CD4-positive, alpha-beta memory T cell (primary cell): ENCODE measurements at regions of chr22 and their contacts with region 1.

Region 1: GRCh38 chr22:24423519-24424000 is 3.8 kb upstream of the ADORA2A start:
- DNase-seq: peak in 4 of 5 donors; percentile 44 to 64 (median 57)
- H3K4me3 ChIP-seq: peak overlapping the region in 1 of 2 donors; percentile 32
- H3K4me3 Mint-ChIP-seq: peak overlapping the region in 7 of 8 donors; percentile 40 to 75 (median 65)
- H3K27ac ChIP-seq: no peak overlapping the region
- H3K27ac Mint-ChIP-seq: peak overlapping the region in 1 of 7 donors; percentile 86
- H3K4me1 ChIP-seq: peaks cover 37% of the 10 kb centered on the region
- H3K4me1 Mint-ChIP-seq: peaks cover 26 to 41% (median 33%) of the 10 kb centered on the region in 4 donors
- H3K27me3 ChIP-seq: no peaks in the 10 kb centered on the region
- H3K27me3 Mint-ChIP-seq: no peaks in the 10 kb centered on the region

Region 2: DNA sequence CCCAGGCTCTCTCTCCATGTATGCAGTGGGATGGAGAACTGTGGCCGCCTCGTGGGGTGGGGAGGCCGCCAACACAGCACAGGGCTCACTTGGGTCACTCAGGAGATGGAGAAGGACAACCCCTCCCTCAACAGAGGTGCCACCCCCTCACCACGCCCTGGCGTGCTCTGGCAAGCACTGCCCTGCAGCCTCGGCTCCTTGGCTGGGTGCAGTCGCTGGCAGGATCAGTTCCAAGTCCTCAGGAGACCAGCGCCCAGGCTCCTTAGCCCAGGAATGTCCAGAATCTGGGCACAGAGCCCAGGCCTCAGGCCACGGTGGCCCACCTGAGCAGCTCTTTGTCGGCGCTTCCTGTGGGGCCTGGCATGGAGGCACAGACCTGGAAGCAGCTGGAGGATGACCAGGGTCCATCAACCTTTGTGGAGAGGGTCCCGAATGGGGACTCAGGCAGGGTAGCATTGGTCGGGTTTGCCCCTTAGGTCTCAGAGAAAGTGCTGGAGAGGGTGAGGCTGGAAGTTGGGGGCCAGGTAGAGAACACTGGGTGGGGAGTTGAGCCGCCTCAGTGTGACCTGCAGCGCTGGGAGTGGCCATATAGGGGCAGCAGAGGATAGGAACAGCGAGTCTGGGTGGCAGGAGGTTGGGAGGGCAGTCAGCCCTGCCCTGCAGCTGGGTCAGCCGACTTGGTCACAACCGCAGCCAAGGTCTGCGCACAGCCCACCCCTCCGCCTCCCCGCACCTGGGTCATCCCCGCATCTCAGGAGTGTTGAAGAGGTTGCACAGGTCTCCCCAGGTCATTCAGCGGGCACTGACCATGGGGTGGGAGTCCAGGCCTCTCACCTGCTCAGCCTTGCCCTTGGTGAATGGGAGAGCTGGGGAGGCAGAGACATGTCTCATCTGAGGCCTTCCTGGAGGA is 234.1 kb before region 1 on chr22:
- CTCF ChIA-PET with region 1: no interaction called
- POLR2A ChIA-PET with region 1: no interaction called
- intact Hi-C with region 1: no loop called
- DNase-seq: peak in 2 of 5 donors; percentile 22 to 24
- H3K4me3 ChIP-seq: no peak overlapping the region
- H3K4me3 Mint-ChIP-seq: no peak overlapping the region
- H3K27ac ChIP-seq: no peak overlapping the region
- H3K27ac Mint-ChIP-seq: peak overlapping the region in 1 of 7 donors; percentile 52
- H3K4me1 ChIP-seq: no peaks in the 10 kb centered on the region
- H3K4me1 Mint-ChIP-seq: peaks cover 0 to 2% (median 0%) of the 10 kb centered on the region in 4 donors
- H3K27me3 ChIP-seq: no peaks in the 10 kb centered on the region
- H3K27me3 Mint-ChIP-seq: no peaks in the 10 kb centered on the region

Region 3: GRCh38 chr22:24325105-24325757 is 98.3 kb before region 1 on chr22:
- CTCF ChIA-PET with region 1: interaction called, 3 read pairs
- POLR2A ChIA-PET with region 1: no interaction called
- intact Hi-C with region 1: loop called (anchors 1 kb)
- DNase-seq: peak in 4 of 5 donors; percentile 39 to 49 (median 44)
- H3K4me3 ChIP-seq: no peak overlapping the region
- H3K4me3 Mint-ChIP-seq: no peak overlapping the region
- H3K27ac ChIP-seq: no peak overlapping the region
- H3K27ac Mint-ChIP-seq: peak overlapping the region in 1 of 7 donors; percentile 12
- H3K4me1 ChIP-seq: peaks cover 9% of the 10 kb centered on the region
- H3K4me1 Mint-ChIP-seq: peaks cover 13 to 22% (median 20%) of the 10 kb centered on the region in 4 donors
- H3K27me3 ChIP-seq: no peaks in the 10 kb centered on the region
- H3K27me3 Mint-ChIP-seq: no peaks in the 10 kb centered on the region

Region 4: GRCh38 chr22:24455751-24456426 is 32.3 kb after region 1 on chr22:
- CTCF ChIA-PET with region 1: interaction called, 14 read pairs
- POLR2A ChIA-PET with region 1: no interaction called
- intact Hi-C with region 1: no loop called
- DNase-seq: no peak
- H3K4me3 ChIP-seq: no peak overlapping the region
- H3K4me3 Mint-ChIP-seq: no peak overlapping the region
- H3K27ac ChIP-seq: no peak overlapping the region
- H3K27ac Mint-ChIP-seq: peak overlapping the region in 1 of 7 donors; percentile 41
- H3K4me1 ChIP-seq: no peaks in the 10 kb centered on the region
- H3K4me1 Mint-ChIP-seq: peaks cover 0 to 2% (median under 1%) of the 10 kb centered on the region in 4 donors
- H3K27me3 ChIP-seq: no peaks in the 10 kb centered on the region
- H3K27me3 Mint-ChIP-seq: no peaks in the 10 kb centered on the region

Region 5: GRCh38 chr22:24503137-24503842 is 79.7 kb after region 1 on chr22:
- CTCF ChIA-PET with region 1: interaction called, 82 read pairs
- POLR2A ChIA-PET with region 1: interaction called, 7 read pairs
- intact Hi-C with region 1: loop called (anchors 1 kb)
- DNase-seq: peak; percentile 41 to 47 (median 45)
- H3K4me3 ChIP-seq: no peak overlapping the region
- H3K4me3 Mint-ChIP-seq: no peak overlapping the region
- H3K27ac ChIP-seq: no peak overlapping the region
- H3K27ac Mint-ChIP-seq: peak overlapping the region in 2 of 7 donors; percentile 1 to 25
- H3K4me1 ChIP-seq: no peaks in the 10 kb centered on the region
- H3K4me1 Mint-ChIP-seq: peaks cover 0 to 4% (median 2%) of the 10 kb centered on the region in 4 donors
- H3K27me3 ChIP-seq: no peaks in the 10 kb centered on the region
- H3K27me3 Mint-ChIP-seq: no peaks in the 10 kb centered on the region

Region 6: GRCh38 chr22:24555157-24556039 is 131.8 kb after region 1 on chr22 and contains the start of gene SNRPD3:
- CTCF ChIA-PET with region 1: no interaction called
- POLR2A ChIA-PET with region 1: interaction called, 25 read pairs
- intact Hi-C with region 1: no loop called
- DNase-seq: peak; percentile 96 to 100 (median 98)
- H3K4me3 ChIP-seq: peak within 1 kb of the TSS; percentile 76 to 100
- H3K4me3 Mint-ChIP-seq: peak within 1 kb of the TSS; percentile 97 to 99 (median 98)
- H3K27ac ChIP-seq: peak within 1 kb of the TSS; percentile 87
- H3K27ac Mint-ChIP-seq: peak within 1 kb of the TSS; percentile 95 to 99 (median 99)
- H3K4me1 ChIP-seq: peaks cover 52% of the 10 kb centered on the region
- H3K4me1 Mint-ChIP-seq: peaks cover 48 to 72% (median 59%) of the 10 kb centered on the region in 4 donors
- H3K27me3 ChIP-seq: no peaks in the 10 kb centered on the region
- H3K27me3 Mint-ChIP-seq: no peaks in the 10 kb centered on the region
- total RNA-seq, gene SNRPD3: 77.6 to 85.0 TPM